RWPE1 (cell line): ENCODE measurements at regions of chr3 and their contacts with region 1.

Region 1: DNA sequence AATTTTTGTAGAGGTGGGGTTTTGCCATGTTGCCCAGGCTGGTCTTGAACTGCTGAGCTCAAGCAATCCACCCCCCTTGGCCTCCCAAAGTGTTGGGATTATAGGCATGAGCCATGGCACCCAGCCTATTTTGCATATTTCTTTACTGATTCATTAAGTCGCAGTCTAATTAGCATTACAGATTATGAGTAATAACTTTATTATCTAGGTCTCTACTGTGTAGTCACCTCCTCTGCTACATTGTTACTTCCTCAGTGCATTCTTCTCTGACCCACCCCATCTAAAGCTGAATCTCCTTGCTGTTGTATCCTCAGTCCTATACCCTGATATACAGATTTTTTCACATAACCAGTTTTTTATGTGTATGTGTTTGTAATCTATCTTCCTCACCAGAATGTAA is 61.7 kb downstream of the TFDP2 start:
- DNase-seq: peak; percentile 77
- H3K27ac ChIP-seq: no peak overlapping the region
- CTCF ChIP-seq: no peak

Region 2: DNA sequence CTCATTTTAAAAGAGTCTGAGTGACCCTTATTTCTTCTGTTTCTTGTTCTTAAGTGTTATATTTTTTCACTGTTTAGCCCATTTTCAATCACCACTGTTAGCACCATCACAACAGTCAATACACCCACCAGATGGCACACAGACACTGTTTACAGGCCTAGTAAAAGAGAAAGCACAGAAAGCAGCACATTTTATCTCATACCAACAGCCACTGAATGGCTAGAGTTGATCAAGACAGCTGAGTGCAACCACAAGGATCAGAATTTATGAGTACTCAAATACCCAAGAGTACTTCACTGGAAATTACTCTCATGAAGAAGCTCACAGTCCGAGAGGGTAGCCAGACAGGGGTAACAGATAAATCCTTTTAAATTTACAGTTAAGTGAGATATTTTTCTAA is 65.3 kb before region 1 on chr3:
- CTCF ChIA-PET with region 1: interaction called, 10 read pairs
- POLR2A ChIA-PET with region 1: no interaction called
- DNase-seq: no peak
- H3K27ac ChIP-seq: no peak overlapping the region
- CTCF ChIP-seq: no peak